Activated CD8-positive, alpha-beta memory T cell treated with anti-CD3 and anti-CD28 coated beads, Interleukin-2, amount 10 ng/mL, durations not matched to agents 7 days and 5 days (primary cell): ENCODE measurements at regions of chr7 and their contacts with region 1.

Region 1: DNA sequence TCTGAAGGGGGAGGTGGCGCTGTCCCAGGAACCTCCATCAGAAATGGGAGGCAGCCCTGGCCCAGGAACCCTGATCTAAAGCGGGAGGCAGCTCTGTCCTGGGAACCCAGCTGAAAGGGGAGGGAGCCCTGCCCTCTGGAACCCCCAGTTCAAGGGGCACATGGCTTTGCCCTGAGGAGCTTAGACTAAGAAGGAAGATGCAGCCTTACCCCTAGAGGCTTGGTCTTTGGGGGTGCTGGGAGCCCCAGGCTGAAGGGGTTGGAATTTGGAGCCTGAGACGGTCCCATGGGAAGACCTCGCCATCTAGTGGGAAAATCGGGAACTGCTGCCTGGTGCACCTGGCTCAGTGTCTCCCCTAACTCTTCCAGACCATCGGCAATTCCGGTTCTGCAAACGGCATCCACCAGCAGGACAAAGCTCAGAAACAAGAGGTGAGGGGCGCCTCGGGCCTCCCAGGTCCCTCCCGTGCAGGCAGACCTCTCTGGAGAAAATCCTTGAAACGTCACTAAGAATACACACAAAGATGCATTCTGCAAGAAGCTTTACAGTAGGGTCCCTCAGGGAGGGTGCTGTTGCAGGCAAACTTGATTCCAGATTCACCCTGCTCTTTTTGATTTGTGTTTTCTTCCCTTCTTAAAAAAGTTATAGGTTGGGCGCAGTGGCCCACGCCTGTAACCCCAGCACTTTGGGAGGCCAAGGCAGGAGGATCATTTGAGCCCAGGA is 52.4 kb upstream of the GTF2IRD1 start:
- DNase-seq: peak; percentile 78
- ATAC-seq: peak; percentile 74
- H3K4me3 Mint-ChIP-seq: no peak overlapping the region
- H3K27ac Mint-ChIP-seq: no peak overlapping the region
- H3K4me1 Mint-ChIP-seq: no peaks in the 10 kb centered on the region
- H3K27me3 Mint-ChIP-seq: no peaks in the 10 kb centered on the region

Region 2: GRCh38 chr7:74173866-74174605 is 227.3 kb before region 1 on chr7 and contains the start of gene EIF4H:
- CTCF ChIA-PET with region 1: interaction called, 12 read pairs
- DNase-seq: peak; percentile 94
- ATAC-seq: peak; percentile 88
- H3K4me3 Mint-ChIP-seq: peak within 1 kb of the TSS; percentile 87
- H3K27ac Mint-ChIP-seq: peak within 1 kb of the TSS; percentile 86
- H3K4me1 Mint-ChIP-seq: peaks cover 41% of the 10 kb centered on the region
- H3K27me3 Mint-ChIP-seq: no peaks in the 10 kb centered on the region
- total RNA-seq, gene EIF4H: 278 to 322 TPM

Region 3: GRCh38 chr7:74231232-74231590 is 170.1 kb before region 1 on chr7:
- CTCF ChIA-PET with region 1: interaction called, 11 read pairs
- DNase-seq: no peak
- ATAC-seq: no peak
- H3K4me3 Mint-ChIP-seq: no peak overlapping the region
- H3K27ac Mint-ChIP-seq: peak overlapping the region; percentile 62
- H3K4me1 Mint-ChIP-seq: peaks cover 40% of the 10 kb centered on the region
- H3K27me3 Mint-ChIP-seq: no peaks in the 10 kb centered on the region

Region 4: DNA sequence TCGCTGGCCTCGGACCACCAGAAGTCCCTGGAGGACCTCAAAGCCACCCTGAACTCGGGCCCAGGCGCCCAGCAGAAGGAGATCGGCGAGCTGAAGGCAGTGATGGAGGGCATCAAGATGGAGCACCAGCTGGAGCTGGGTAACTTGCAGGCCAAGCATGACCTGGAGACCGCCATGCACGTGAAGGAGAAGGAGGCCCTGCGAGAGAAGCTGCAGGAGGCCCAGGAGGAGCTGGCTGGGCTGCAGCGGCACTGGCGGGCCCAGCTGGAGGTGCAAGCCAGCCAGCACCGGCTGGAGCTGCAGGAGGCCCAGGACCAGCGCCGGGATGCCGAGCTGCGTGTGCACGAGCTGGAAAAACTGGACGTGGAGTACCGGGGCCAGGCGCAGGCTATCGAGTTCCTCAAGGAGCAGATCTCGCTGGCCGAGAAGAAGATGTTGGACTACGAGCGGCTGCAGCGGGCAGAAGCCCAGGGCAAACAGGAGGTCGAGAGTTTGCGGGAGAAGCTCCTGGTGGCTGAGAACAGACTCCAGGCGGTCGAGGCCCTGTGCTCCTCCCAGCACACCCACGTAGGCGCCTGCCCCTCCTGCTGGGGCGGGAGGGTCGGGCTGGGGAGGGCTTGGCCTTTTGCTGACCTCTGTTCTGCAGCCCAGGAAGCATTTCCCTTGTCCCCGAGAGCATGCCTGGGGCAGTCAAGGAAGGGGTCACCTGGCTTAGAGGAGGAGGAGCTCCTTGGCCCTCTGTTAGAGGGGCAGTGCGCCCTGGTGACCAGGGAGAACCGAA is 24.9 kb before region 1 on chr7:
- CTCF ChIA-PET with region 1: interaction called, 12 read pairs
- DNase-seq: no peak
- ATAC-seq: no peak
- H3K4me3 Mint-ChIP-seq: no peak overlapping the region
- H3K27ac Mint-ChIP-seq: no peak overlapping the region
- H3K4me1 Mint-ChIP-seq: no peaks in the 10 kb centered on the region
- H3K27me3 Mint-ChIP-seq: no peaks in the 10 kb centered on the region